Natural killer cell (primary cell): ENCODE measurements at regions of chr6 and their contacts with region 1.

Region 1: GRCh38 chr6:13908955-13909381 is 15.8 kb upstream of the RNF182 start:
- DNase-seq: peak in 1 of 2 donors; percentile 78
- ATAC-seq: peak; percentile 69 to 77 (median 73)
- H3K4me3 ChIP-seq: no peak overlapping the region
- H3K4me3 Mint-ChIP-seq: no peak overlapping the region
- H3K27ac ChIP-seq: no peak overlapping the region
- H3K27ac Mint-ChIP-seq: no peak overlapping the region
- H3K4me1 ChIP-seq: no peaks in the 10 kb centered on the region
- H3K4me1 Mint-ChIP-seq: peaks cover 0 to 5% of the 10 kb centered on the region in 2 donors
- H3K27me3 ChIP-seq: no peaks in the 10 kb centered on the region
- H3K27me3 Mint-ChIP-seq: peaks cover 12 to 32% of the 10 kb centered on the region in 2 donors
- CTCF ChIP-seq: peak; percentile 80

Region 2: GRCh38 chr6:13953061-13953705 is 44.2 kb after region 1 on chr6:
- intact Hi-C with region 1: no loop called
- DNase-seq: no peak
- ATAC-seq: no peak
- H3K4me3 ChIP-seq: no peak overlapping the region
- H3K4me3 Mint-ChIP-seq: no peak overlapping the region
- H3K27ac ChIP-seq: no peak overlapping the region
- H3K27ac Mint-ChIP-seq: no peak overlapping the region
- H3K4me1 ChIP-seq: no peaks in the 10 kb centered on the region
- H3K4me1 Mint-ChIP-seq: no peaks in the 10 kb centered on the region
- H3K27me3 ChIP-seq: peaks cover 2% of the 10 kb centered on the region
- H3K27me3 Mint-ChIP-seq: peaks cover 17 to 21% of the 10 kb centered on the region in 2 donors
- CTCF ChIP-seq: no peak

Region 3: DNA sequence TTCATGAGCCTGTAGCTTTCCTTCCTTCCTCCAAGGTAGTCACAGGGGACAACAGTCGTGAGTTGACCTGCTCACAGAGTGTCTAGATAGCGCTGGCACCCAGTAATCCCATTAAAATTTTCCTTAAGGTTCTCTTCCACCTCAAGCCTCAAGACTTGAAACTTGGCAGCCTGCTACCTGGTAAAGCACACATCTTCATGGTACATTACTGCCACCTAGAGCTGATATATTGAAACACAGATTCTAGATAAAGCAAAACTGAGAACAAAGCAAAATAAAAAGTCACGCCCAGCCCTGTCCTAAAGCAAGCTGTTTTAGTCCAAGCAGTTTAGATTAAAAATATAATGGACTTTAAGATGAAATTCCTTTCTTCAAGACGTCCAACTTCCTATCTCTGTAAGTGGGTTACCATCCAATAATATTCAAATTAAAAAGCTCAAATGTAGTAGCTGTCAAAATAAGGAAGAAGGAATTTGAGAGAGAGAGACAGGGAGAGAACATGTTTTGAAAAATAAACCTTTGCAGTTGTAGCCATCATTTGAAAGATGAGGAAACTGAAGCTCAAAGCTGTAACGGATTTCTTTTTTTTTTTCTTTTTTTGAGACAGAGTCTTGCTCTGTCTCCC is 157.9 kb after region 1 on chr6:
- intact Hi-C with region 1: loop called (anchors 1 kb)
- DNase-seq: peak in 1 of 2 donors; percentile 78
- ATAC-seq: peak; percentile 77 to 90 (median 83)
- H3K4me3 ChIP-seq: no peak overlapping the region
- H3K4me3 Mint-ChIP-seq: no peak overlapping the region
- H3K27ac ChIP-seq: no peak overlapping the region
- H3K27ac Mint-ChIP-seq: no peak overlapping the region
- H3K4me1 ChIP-seq: no peaks in the 10 kb centered on the region
- H3K4me1 Mint-ChIP-seq: peaks cover 7 to 10% of the 10 kb centered on the region in 2 donors
- H3K27me3 ChIP-seq: no peaks in the 10 kb centered on the region
- H3K27me3 Mint-ChIP-seq: peaks cover 12 to 27% of the 10 kb centered on the region in 2 donors
- CTCF ChIP-seq: peak; percentile 67